Mammary epithelial cell (primary cell): ENCODE measurements at regions of chr13 and their contacts with region 1.

Region 1: DNA sequence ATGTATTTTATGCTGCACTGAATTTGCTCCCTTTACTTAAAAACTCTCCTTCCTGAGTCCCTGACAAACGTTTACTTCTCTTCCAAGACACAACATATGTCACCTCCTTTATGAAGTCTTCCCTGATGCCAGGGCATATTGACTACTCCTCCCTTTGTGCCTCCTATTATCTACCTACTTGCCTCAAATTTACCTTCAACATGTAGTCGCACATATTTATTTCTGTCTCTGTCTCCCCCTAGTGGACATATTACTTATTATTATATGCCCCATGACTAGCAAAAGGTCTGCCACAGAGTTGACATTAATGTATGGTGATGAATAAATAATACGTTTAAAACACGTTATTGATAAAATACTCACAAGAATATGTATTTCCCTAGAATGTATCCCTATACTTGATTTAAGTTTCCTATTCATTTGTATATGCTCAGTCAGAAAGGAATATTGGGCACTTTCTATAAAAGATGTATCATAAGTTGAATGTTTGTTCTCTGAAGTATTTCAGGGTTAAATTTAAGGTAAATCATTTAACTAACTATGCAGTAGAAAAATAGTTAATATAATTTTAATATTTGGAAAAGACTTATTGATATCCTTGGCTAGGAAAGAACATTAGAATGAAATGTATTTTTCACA is 250.3 kb upstream of the ATXN8OS start:
- DNase-seq: peak; percentile 18
- H3K4me3 ChIP-seq: no peak overlapping the region
- H3K27ac ChIP-seq: no peak overlapping the region
- H3K4me1 ChIP-seq: no peaks in the 10 kb centered on the region
- H3K27me3 ChIP-seq: no peaks in the 10 kb centered on the region
- CTCF ChIP-seq: peak; percentile 53 to 60

Region 2: GRCh38 chr13:69545551-69545950 is 311.8 kb before region 1 on chr13:
- CTCF ChIA-PET with region 1: no interaction called
- dilution Hi-C with region 1: no loop called
- in situ Hi-C with region 1: loop called (anchors 10 to 25 kb)
- intact Hi-C with region 1: no loop called
- DNase-seq: no peak
- H3K4me3 ChIP-seq: no peak overlapping the region
- H3K27ac ChIP-seq: no peak overlapping the region
- H3K4me1 ChIP-seq: no peaks in the 10 kb centered on the region
- H3K27me3 ChIP-seq: no peaks in the 10 kb centered on the region
- CTCF ChIP-seq: no peak

Region 3: DNA sequence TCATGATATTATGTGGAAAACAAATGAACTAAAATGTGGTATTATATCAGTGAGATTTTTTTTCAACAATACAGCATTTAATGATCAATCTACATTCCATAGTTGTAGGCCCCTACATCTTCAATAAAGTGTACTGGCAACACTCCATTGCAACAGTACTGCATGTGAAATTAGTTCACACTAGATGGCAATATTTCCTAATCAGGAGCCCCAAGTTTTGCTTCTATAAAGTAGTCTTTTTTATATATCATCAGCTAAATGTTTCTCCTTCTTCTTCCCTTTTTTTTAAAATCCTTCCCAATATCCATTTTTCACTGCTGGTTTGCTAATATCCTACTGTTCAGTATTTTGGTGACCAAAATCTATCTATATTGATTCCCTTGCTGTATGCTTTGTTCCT is 278.0 kb before region 1 on chr13:
- CTCF ChIA-PET with region 1: no interaction called
- dilution Hi-C with region 1: no loop called
- in situ Hi-C with region 1: no loop called
- intact Hi-C with region 1: loop called (anchors 1 kb)
- DNase-seq: peak; percentile 3
- H3K4me3 ChIP-seq: no peak overlapping the region
- H3K27ac ChIP-seq: peak overlapping the region; percentile 47
- H3K4me1 ChIP-seq: peaks cover 4% of the 10 kb centered on the region
- H3K27me3 ChIP-seq: no peaks in the 10 kb centered on the region
- CTCF ChIP-seq: peak; percentile 9 to 42

Region 4: GRCh38 chr13:70310396-70311119 is 453.3 kb after region 1 on chr13:
- CTCF ChIA-PET with region 1: no interaction called
- dilution Hi-C with region 1: no loop called
- in situ Hi-C with region 1: no loop called
- intact Hi-C with region 1: loop called (anchors 10 kb)
- DNase-seq: peak; percentile 14
- H3K4me3 ChIP-seq: no peak overlapping the region
- H3K27ac ChIP-seq: no peak overlapping the region
- H3K4me1 ChIP-seq: no peaks in the 10 kb centered on the region
- H3K27me3 ChIP-seq: no peaks in the 10 kb centered on the region
- CTCF ChIP-seq: peak; percentile 28 to 65